ENCODE measurements at regions of chr1 and their contacts with region 1.

Region 1: DNA sequence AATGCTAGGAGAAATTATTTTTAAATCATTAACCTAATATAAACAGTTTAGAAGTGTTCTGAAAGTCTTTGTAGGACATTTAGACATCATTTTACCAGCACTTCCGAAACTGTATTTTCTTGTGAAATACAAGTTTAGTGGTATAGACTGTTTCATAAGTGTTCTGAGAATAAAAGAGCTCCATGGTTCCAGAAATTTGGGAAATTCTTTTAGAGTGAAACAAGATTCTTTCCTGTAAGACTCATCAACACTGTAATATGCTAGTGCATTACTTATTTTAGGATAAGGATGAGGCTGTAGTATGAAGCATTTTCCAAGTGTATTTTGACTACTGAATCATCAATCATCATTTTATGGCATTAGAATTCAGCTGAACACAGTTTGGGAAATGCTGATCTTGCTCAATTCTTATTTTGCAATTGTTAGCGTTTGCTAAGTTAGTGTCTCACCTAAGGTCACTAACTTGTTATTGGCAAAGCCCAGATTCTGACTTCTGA is 73.4 kb downstream of the CEP350 start:
- DNase-seq: no peak
- ATAC-seq: no peak
- H3K4me3 ChIP-seq: no peak overlapping the region
- H3K4me3 Mint-ChIP-seq: no peak overlapping the region
- H3K27ac ChIP-seq: no peak overlapping the region
- H3K27ac Mint-ChIP-seq: no peak overlapping the region
- H3K4me1 ChIP-seq: no peaks in the 10 kb centered on the region
- H3K4me1 Mint-ChIP-seq: peaks cover 0 to 5% of the 10 kb centered on the region in 2 donors
- H3K27me3 ChIP-seq: no peaks in the 10 kb centered on the region
- H3K27me3 Mint-ChIP-seq: no peaks in the 10 kb centered on the region
- CTCF ChIP-seq: no peak

Region 2: DNA sequence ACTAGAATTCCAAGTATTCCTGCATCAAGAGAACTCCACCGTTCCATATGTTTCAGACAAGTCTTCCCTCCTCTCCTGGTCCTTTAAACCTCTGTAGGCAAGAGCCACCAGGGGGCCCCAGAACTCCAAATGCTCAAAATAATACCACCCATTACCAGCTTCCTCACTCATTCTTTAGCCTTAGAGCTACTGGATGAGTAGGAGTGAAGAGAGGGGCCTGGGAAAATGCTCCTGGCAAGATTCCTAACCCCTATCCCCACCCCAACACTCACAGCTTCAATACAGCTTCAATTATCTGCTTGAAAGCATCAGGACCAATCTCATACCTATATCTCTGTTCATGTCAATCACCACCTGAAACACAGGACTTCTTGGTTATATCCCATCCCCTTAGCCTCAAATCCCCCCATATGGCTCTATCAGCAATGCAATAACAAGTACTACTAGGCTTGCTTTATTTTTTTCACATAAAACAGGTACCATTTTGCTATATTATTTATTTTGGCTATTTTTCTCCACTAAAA is 160.1 kb before region 1 on chr1:
- intact Hi-C with region 1: loop called (anchors 10 kb)
- DNase-seq: peak; percentile 35 to 73
- ATAC-seq: peak in 2 of 3 donors; percentile 77 to 89
- H3K4me3 ChIP-seq: no peak overlapping the region
- H3K4me3 Mint-ChIP-seq: no peak overlapping the region
- H3K27ac ChIP-seq: no peak overlapping the region
- H3K27ac Mint-ChIP-seq: peak overlapping the region in 1 of 2 donors; percentile 52
- H3K4me1 ChIP-seq: no peaks in the 10 kb centered on the region
- H3K4me1 Mint-ChIP-seq: peaks cover 18 to 24% of the 10 kb centered on the region in 2 donors
- H3K27me3 ChIP-seq: no peaks in the 10 kb centered on the region
- H3K27me3 Mint-ChIP-seq: no peaks in the 10 kb centered on the region
- CTCF ChIP-seq: peak; percentile 79

Region 3: GRCh38 chr1:180003026-180003695 is 24.8 kb before region 1 on chr1:
- intact Hi-C with region 1: no loop called
- DNase-seq: no peak
- ATAC-seq: no peak
- H3K4me3 ChIP-seq: no peak overlapping the region
- H3K4me3 Mint-ChIP-seq: no peak overlapping the region
- H3K27ac ChIP-seq: no peak overlapping the region
- H3K27ac Mint-ChIP-seq: no peak overlapping the region
- H3K4me1 ChIP-seq: no peaks in the 10 kb centered on the region
- H3K4me1 Mint-ChIP-seq: no peaks in the 10 kb centered on the region
- H3K27me3 ChIP-seq: no peaks in the 10 kb centered on the region
- H3K27me3 Mint-ChIP-seq: no peaks in the 10 kb centered on the region
- CTCF ChIP-seq: no peak

Region 4: DNA sequence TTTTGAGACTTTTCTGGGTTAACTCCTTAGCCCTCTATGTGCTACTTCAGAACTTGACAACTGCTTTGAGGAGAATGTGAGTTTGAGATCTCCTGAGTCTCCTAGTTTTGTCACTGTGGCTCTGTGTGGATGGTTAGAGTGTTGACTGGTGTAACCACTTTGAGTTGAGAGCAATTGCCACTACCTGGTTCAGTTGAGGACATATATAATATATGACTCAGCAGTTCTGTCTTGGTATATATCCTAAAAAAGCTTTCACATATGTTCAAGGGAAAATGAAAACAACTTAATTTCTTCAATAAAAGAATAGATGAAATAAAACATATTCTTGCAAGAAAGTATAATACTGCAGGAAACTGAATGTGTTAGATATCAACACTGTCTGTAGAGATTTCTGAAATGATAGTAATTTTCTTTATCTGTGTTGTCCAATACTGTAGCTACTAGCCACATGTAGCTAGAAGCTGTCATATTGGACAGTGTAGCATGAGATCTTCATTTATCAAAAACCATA is 29.9 kb after region 1 on chr1:
- intact Hi-C with region 1: no loop called
- DNase-seq: no peak
- ATAC-seq: no peak
- H3K4me3 ChIP-seq: no peak overlapping the region
- H3K4me3 Mint-ChIP-seq: no peak overlapping the region
- H3K27ac ChIP-seq: no peak overlapping the region
- H3K27ac Mint-ChIP-seq: peak overlapping the region in 1 of 2 donors; percentile 41
- H3K4me1 ChIP-seq: no peaks in the 10 kb centered on the region
- H3K4me1 Mint-ChIP-seq: peaks cover 9% of the 10 kb centered on the region in 2 donors
- H3K27me3 ChIP-seq: no peaks in the 10 kb centered on the region
- H3K27me3 Mint-ChIP-seq: no peaks in the 10 kb centered on the region
- CTCF ChIP-seq: no peak